H1 (cell line): ENCODE measurements at regions of chr21 and their contacts with region 1.

Region 1: DNA sequence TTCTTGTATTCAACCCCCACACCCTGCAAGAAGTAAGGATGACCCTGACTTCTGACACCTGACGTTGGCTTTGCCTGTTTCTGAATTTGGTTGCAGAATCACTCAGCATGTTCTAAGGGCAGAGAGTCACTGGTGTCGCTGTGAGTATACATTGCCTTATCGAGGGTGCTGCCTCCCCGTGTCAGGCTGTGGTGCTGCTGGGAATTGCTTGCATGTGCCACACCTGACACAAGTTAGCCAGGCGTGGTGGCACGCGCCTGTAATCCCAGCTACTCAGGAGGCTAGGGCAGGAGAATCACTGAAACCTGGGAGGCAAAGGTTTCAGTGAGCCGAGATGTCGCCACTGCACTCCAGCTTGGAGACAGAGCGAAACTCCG is 45.9 kb downstream of the WDR4 start:
- DNase-seq: peak in 1 of 2 experiments; percentile 61
- H3K4me3 ChIP-seq: no peak overlapping the region
- H3K27ac ChIP-seq: no peak overlapping the region
- H3K4me1 ChIP-seq: peaks cover 0 to 7% (median 6%) of the 10 kb centered on the region in 4 experiments; a peak in 5 of 7 replicates
- H3K27me3 ChIP-seq: peaks cover 0 to 10% (median 2%) of the 10 kb centered on the region in 4 experiments; a peak in 4 of 7 replicates
- CTCF ChIP-seq: peak; percentile 42 to 53 (median 52)
- EP300 ChIP-seq: no peak
- POLR2A ChIP-seq: no peak
- RAD21 ChIP-seq: peak in 1 of 2 experiments; percentile 21; a peak in 3 of 4 replicates

Region 2: DNA sequence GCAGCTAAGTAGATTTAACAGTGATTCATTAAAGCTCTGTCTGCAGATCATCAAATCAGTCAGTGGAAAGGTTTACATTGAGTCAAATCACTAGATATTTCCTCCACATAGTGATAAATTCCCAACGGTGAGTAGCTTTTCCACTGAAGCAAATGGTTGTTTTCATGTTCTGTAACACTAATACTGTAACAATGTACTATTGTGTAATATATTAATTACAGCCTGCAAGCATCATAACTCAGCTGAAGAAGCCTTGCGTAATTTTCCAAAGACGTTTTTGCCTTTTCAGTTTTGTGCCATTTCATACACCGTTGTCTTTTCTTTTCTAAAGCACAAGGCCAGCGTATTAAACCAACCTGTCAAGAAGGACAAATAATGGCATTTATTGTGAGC is 196.9 kb before region 1 on chr21:
- CTCF ChIA-PET with region 1: no interaction called
- POLR2A ChIA-PET with region 1: no interaction called
- DNase-seq: no peak
- H3K4me3 ChIP-seq: no peak overlapping the region
- H3K27ac ChIP-seq: no peak overlapping the region
- H3K4me1 ChIP-seq: peaks cover 4 to 23% (median 8%) of the 10 kb centered on the region in 4 experiments; a peak in 6 of 7 replicates
- H3K27me3 ChIP-seq: peaks cover 0 to 7% (median 3%) of the 10 kb centered on the region in 4 experiments; a peak in 3 of 7 replicates
- CTCF ChIP-seq: no peak
- EP300 ChIP-seq: no peak
- POLR2A ChIP-seq: no peak
- RAD21 ChIP-seq: no peak

Region 3: GRCh38 chr21:42652527-42653230 is 180.7 kb before region 1 on chr21:
- CTCF ChIA-PET with region 1: no interaction called
- POLR2A ChIA-PET with region 1: no interaction called
- DNase-seq: peak in 1 of 2 experiments; percentile 75
- H3K4me3 ChIP-seq: peak overlapping the region; percentile 64 to 92 (median 76)
- H3K27ac ChIP-seq: 0 out of 2 replicates have a peak overlapping the region, but pooled peaks have one; percentile 31
- H3K4me1 ChIP-seq: peaks cover 13 to 41% (median 36%) of the 10 kb centered on the region in 4 experiments
- H3K27me3 ChIP-seq: no peaks in the 10 kb centered on the region; a peak in 2 of 7 replicates
- CTCF ChIP-seq: peak in 2 of 3 experiments; percentile 64 to 66; a peak in 3 of 4 replicates
- EP300 ChIP-seq: no peak
- POLR2A ChIP-seq: no peak
- RAD21 ChIP-seq: peak; percentile 42 to 62; a peak in 3 of 4 replicates

Region 4: DNA sequence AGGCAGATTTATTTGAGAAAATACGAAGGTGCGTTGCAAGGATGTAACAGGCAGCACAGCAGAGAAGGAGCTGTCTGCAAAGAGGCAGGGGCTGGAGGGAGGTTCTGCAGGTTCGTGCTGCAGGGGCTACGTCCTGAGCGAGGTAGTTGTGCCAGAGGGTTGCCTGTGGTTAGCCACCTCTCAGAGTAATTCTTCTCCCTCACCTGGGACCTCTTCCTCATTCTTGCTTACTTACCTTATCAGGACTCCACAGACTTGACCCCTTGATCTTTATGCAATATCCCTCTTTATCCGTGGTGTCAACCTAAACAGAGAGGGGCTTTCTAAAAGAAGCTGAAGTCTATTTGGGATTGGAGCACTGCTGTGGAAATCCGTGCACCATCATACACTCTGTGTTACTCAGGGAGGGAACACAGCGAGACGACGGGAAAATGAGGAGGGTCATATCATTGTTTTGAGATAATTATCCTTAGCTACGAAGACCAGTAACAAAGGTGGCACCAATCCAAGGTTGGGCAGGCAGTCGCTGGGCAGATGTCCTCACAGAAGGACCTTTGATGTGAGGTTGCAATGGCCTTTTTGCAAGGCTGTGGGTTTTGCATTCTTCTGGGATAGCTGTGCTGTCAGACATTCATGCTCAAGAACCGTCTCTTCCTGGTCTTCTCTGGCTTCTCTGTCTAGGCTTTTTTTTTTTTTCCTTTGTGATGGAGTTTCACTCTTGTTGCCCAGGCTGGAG is 36.9 kb before region 1 on chr21:
- CTCF ChIA-PET with region 1: interaction called, 3 read pairs
- POLR2A ChIA-PET with region 1: interaction called, 12 read pairs
- DNase-seq: no peak
- H3K4me3 ChIP-seq: no peak overlapping the region
- H3K27ac ChIP-seq: no peak overlapping the region
- H3K4me1 ChIP-seq: peaks cover 0 to 9% (median 6%) of the 10 kb centered on the region in 4 experiments; a peak in 4 of 7 replicates
- H3K27me3 ChIP-seq: no peaks in the 10 kb centered on the region; a peak in 1 of 7 replicates
- CTCF ChIP-seq: no peak
- EP300 ChIP-seq: no peak
- POLR2A ChIP-seq: no peak
- RAD21 ChIP-seq: no peak

Region 5: GRCh38 chr21:42818328-42818749 is 15.1 kb before region 1 on chr21:
- CTCF ChIA-PET with region 1: interaction called, 7 read pairs
- POLR2A ChIA-PET with region 1: interaction called, 13 read pairs
- DNase-seq: peak in 1 of 2 experiments; percentile 80
- H3K4me3 ChIP-seq: no peak overlapping the region
- H3K27ac ChIP-seq: no peak overlapping the region
- H3K4me1 ChIP-seq: peaks cover 0 to 1% (median 0%) of the 10 kb centered on the region in 4 experiments; a peak in 1 of 7 replicates
- H3K27me3 ChIP-seq: no peaks in the 10 kb centered on the region
- CTCF ChIP-seq: peak; percentile 76 to 91 (median 77)
- EP300 ChIP-seq: no peak
- POLR2A ChIP-seq: no peak
- RAD21 ChIP-seq: peak; percentile 85 to 89

Region 6: GRCh38 chr21:42845296-42845965 is 12.0 kb after region 1 on chr21:
- CTCF ChIA-PET with region 1: interaction called, 10 read pairs
- POLR2A ChIA-PET with region 1: interaction called, 11 read pairs
- DNase-seq: no peak
- H3K4me3 ChIP-seq: no peak overlapping the region
- H3K27ac ChIP-seq: no peak overlapping the region
- H3K4me1 ChIP-seq: no peaks in the 10 kb centered on the region
- H3K27me3 ChIP-seq: no peaks in the 10 kb centered on the region; a peak in 1 of 7 replicates
- CTCF ChIP-seq: no peak
- EP300 ChIP-seq: no peak
- POLR2A ChIP-seq: no peak
- RAD21 ChIP-seq: no peak

Region 7: DNA sequence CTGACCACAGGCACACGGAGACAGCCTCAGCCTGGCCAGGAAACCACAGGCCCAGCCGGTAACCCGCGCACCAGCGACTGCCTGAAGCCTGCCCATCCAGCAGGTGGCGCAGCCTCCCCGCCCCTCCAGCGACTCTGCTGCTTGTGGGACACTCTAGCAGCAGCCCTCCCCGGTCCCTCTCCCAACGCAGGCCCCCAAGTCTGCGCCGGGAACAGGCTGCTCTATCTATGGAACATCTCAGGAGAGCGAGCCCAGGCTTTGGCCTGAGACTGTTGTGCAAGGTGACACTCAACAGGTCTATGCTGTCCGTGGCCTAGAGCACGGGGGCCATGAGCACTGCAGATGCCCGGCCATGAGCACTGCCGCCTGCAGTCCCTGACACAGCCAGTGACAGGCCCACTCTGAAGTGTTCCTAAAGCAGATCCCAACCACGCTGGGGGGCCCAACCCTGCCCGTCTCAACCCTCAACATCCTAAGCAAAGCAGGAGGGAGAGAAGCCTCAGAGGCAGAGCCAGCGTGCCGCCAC is 17.5 kb after region 1 on chr21:
- CTCF ChIA-PET with region 1: interaction called, 10 read pairs
- POLR2A ChIA-PET with region 1: interaction called, 6 read pairs
- DNase-seq: peak; percentile 44 to 91
- H3K4me3 ChIP-seq: no peak overlapping the region
- H3K27ac ChIP-seq: no peak overlapping the region
- H3K4me1 ChIP-seq: no peaks in the 10 kb centered on the region
- H3K27me3 ChIP-seq: no peaks in the 10 kb centered on the region
- CTCF ChIP-seq: peak in 2 of 3 experiments; percentile 87 to 92; a peak in 3 of 4 replicates
- EP300 ChIP-seq: no peak
- POLR2A ChIP-seq: 0 out of 3 replicates have a peak, but pooled peaks of 1 of the 2 experiments have one; percentile 44
- RAD21 ChIP-seq: peak; percentile 60 to 64; a peak in 3 of 4 replicates

Region 8: DNA sequence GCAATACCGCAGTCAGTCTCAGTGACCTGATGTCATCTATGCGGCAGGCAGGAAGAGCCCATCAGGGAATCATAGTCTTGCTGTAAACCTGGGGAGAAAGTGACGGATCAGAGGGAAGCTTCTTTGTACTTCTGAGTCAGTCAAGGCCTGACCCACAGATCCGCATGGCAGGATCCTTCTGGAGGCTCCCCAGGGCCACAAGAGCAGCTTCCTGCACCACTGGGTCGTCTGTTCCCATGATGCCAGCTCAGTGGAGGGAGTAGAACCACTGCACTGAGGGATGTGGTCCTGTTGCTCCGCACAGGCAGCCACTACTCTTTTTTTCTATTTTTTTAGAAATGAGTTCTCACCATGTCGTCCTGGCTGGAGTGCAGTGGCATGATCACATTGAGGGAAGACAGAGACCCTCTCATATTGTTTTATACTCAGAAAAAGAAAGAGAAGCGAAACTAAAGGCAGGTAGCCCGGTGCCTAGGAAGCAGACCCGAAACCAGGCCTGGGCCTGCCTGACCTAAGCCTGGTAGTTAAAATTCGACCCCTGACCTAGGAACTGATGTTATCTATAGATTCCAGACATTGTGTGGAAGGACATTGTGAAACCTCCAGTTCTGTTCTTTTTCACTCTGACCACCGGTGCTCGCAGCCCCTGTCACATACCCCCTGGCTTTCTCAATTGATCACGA is 98.3 kb after region 1 on chr21:
- CTCF ChIA-PET with region 1: no interaction called
- POLR2A ChIA-PET with region 1: no interaction called
- DNase-seq: no peak
- H3K4me3 ChIP-seq: no peak overlapping the region
- H3K27ac ChIP-seq: no peak overlapping the region
- H3K4me1 ChIP-seq: peaks cover 2 to 11% (median 4%) of the 10 kb centered on the region in 4 experiments; a peak in 5 of 7 replicates
- H3K27me3 ChIP-seq: no peaks in the 10 kb centered on the region
- CTCF ChIP-seq: no peak
- EP300 ChIP-seq: no peak
- POLR2A ChIP-seq: no peak
- RAD21 ChIP-seq: no peak